Activated B cell treated with CpG ODN at 0.5 μM for 24 hours (primary cell): ENCODE measurements at regions of chr11 and their contacts with region 1.

Region 1: GRCh38 chr11:47863189-47863892 is 15.2 kb upstream of the NUP160 start:
- DNase-seq: no peak
- ATAC-seq: peak; percentile 69
- H3K4me3 Mint-ChIP-seq: peak overlapping the region; percentile 56
- H3K27ac Mint-ChIP-seq: peak overlapping the region; percentile 91
- H3K4me1 Mint-ChIP-seq: peaks cover 84% of the 10 kb centered on the region
- H3K27me3 Mint-ChIP-seq: no peaks in the 10 kb centered on the region
- CTCF ChIP-seq: no peak

Region 2: DNA sequence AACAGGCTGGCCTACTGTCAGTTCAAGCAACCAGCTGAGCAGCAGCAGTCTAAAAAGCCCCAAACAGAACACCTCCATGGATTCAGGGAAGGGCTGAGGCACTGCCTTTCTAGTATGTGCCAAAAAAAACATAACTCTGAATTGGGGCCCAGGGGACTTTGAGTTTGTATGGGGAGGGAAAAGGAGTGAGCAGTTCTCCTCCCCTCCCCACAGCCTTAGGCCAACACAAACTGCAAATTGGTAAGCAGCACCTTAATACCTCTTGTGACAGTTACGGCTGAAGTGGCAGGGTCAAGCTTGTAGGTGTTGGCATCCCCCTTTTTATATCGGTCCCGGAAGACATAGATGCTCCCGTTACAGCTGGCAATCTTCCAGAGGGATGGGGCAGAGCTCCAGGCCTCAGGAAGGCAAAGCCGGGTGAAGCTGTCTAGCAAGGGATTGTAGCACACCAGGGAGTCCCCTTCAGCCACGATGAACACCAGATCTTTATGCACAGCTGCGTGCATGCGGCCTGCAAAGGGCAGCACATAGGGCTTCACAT is 290.6 kb before region 1 on chr11:
- CTCF ChIA-PET with region 1: no interaction called
- POLR2A ChIA-PET with region 1: no interaction called
- intact Hi-C with region 1: no loop called
- DNase-seq: no peak
- ATAC-seq: no peak
- H3K4me3 Mint-ChIP-seq: no peak overlapping the region
- H3K27ac Mint-ChIP-seq: no peak overlapping the region
- H3K4me1 Mint-ChIP-seq: peaks cover 12% of the 10 kb centered on the region
- H3K27me3 Mint-ChIP-seq: no peaks in the 10 kb centered on the region
- CTCF ChIP-seq: no peak

Region 3: DNA sequence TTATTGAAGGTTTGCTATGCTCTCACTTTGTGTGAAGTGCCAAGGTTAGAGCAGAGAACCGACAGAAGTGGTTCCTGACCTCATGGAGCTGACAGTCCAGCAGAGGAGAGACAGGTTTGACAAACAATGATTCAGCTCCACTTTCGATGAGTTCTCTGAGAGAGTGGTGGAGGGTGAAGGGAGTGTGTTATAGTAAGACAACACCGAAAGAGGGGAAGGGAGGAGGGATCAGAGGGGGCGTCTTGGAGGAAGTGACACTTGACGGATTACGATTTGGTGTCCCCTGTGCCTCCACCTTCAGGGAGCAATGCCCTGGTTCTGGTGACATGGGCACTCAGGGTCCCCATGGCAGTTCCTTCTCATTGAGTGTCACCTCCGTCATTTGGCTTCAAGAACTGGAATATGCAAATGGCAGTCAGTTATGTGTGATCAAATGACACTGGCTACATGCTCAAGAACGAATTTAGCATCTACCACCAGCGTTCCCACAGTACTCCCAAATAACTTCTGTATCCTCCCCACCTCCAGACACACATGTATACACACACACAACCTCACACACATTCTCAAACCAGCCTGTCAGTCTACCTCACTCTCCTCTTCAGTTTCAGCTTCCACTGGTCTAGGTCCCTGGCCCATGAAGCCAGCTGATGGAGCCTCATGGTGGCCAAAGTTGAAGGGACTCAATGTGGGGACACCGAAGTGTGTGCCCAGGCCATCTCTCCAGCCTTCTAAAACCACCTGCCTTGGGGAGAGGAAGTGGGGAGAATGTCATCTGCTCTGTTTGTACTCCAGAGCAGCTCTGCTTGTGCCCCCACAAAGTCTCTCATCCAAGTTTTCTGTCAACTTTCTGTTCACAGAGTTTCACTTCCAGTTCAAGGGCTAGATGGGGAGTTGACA is 16.2 kb after region 1 on chr11:
- CTCF ChIA-PET with region 1: interaction called, 3 read pairs
- POLR2A ChIA-PET with region 1: interaction called, 18 read pairs
- intact Hi-C with region 1: loop called (anchors 2 kb)
- DNase-seq: no peak
- ATAC-seq: peak; percentile 66
- H3K4me3 Mint-ChIP-seq: peak overlapping the region; percentile 0
- H3K27ac Mint-ChIP-seq: peak overlapping the region; percentile 72
- H3K4me1 Mint-ChIP-seq: peaks cover 25% of the 10 kb centered on the region
- H3K27me3 Mint-ChIP-seq: no peaks in the 10 kb centered on the region
- CTCF ChIP-seq: no peak

Region 4: DNA sequence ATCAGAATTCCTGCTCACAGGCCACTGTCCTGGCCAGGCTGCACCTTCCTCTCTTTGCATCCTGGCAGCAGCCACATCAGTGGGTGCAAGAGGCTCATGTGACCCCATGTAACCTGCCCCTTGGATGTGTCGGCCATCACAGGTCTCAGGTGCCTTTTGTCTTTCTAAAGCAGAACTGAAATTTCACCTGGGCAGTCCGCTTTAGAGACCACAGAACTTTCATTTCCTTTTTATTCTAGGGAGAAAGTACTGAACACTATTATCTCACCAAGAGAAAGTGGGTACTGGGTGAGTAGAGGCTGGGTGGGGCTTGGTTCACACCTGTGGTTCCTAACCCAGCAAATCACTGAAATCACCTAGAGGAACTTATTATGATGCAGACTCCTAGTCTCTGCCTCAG is 36.5 kb after region 1 on chr11:
- CTCF ChIA-PET with region 1: no interaction called
- POLR2A ChIA-PET with region 1: interaction called, 7 read pairs
- intact Hi-C with region 1: loop called (anchors 1 kb)
- DNase-seq: no peak
- ATAC-seq: peak; percentile 94
- H3K4me3 Mint-ChIP-seq: no peak overlapping the region
- H3K27ac Mint-ChIP-seq: peak overlapping the region; percentile 83
- H3K4me1 Mint-ChIP-seq: peaks cover 48% of the 10 kb centered on the region
- H3K27me3 Mint-ChIP-seq: no peaks in the 10 kb centered on the region
- CTCF ChIP-seq: no peak

Region 5: GRCh38 chr11:48055292-48056132 is 192.2 kb after region 1 on chr11:
- CTCF ChIA-PET with region 1: no interaction called
- POLR2A ChIA-PET with region 1: no interaction called
- intact Hi-C with region 1: no loop called
- DNase-seq: no peak
- ATAC-seq: peak; percentile 77
- H3K4me3 Mint-ChIP-seq: peak overlapping the region; percentile 64
- H3K27ac Mint-ChIP-seq: no peak overlapping the region
- H3K4me1 Mint-ChIP-seq: peaks cover 83% of the 10 kb centered on the region
- H3K27me3 Mint-ChIP-seq: no peaks in the 10 kb centered on the region
- CTCF ChIP-seq: no peak